MCF 10A (cell line): ENCODE measurements at regions of chr9 and their contacts with region 1.

Region 1: GRCh38 chr9:1619915-1620710 is 395.0 kb upstream of the SMARCA2 start:
- DNase-seq: peak; percentile 32
- H3K4me3 Mint-ChIP-seq: peak overlapping the region; percentile 24
- H3K27ac Mint-ChIP-seq: peak overlapping the region; percentile 60
- H3K4me1 Mint-ChIP-seq: peaks cover 5% of the 10 kb centered on the region
- H3K27me3 Mint-ChIP-seq: peaks cover 50% of the 10 kb centered on the region
- CTCF ChIP-seq: peak; percentile 33

Region 2: GRCh38 chr9:1100945-1101344 is 519.2 kb before region 1 on chr9:
- CTCF ChIA-PET with region 1: interaction called, 11 read pairs
- POLR2A ChIA-PET with region 1: no interaction called
- intact Hi-C with region 1: loop called (anchors 5 kb)
- DNase-seq: peak; percentile 59
- H3K4me3 Mint-ChIP-seq: no peak overlapping the region
- H3K27ac Mint-ChIP-seq: no peak overlapping the region
- H3K4me1 Mint-ChIP-seq: peaks cover 6% of the 10 kb centered on the region
- H3K27me3 Mint-ChIP-seq: peaks cover 11% of the 10 kb centered on the region
- CTCF ChIP-seq: peak; percentile 72

Region 3: DNA sequence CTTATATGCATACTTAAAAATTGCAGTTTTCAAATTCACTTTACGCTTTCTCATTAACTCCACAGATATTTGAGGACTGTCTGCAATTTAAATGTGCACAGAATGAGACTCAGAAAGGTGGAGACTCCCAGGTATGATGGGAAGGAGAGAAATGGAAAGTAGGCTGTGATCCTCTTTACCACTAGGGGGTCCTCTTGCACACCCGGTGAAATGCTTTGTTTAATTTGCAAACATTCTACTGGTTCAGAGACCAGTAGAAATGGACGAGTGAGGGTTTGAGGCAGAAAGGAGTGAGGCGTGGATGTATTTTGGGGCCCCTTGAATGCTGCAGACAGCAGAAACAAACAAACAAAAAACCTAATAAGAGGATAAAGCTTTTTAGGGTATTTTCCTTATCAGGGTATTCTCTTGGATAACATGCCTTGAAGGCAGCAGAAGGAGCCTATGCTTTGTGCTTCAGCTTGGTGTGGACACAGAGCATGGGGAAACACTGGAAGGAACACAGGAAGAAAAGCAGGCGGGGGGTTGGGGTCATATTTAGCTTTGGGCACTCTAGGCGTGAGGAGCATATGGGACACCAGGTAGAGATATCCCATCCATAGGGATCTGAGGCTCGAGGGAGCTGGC is 159.9 kb before region 1 on chr9:
- CTCF ChIA-PET with region 1: interaction called, 4 read pairs
- POLR2A ChIA-PET with region 1: no interaction called
- intact Hi-C with region 1: loop called (anchors 1 kb)
- DNase-seq: peak; percentile 59
- H3K4me3 Mint-ChIP-seq: no peak overlapping the region
- H3K27ac Mint-ChIP-seq: no peak overlapping the region
- H3K4me1 Mint-ChIP-seq: peaks cover 22% of the 10 kb centered on the region
- H3K27me3 Mint-ChIP-seq: no peaks in the 10 kb centered on the region
- CTCF ChIP-seq: peak; percentile 66

Region 4: GRCh38 chr9:1637401-1637800 is 17.3 kb after region 1 on chr9:
- CTCF ChIA-PET with region 1: interaction called, 11 read pairs
- POLR2A ChIA-PET with region 1: interaction called, 3 read pairs
- intact Hi-C with region 1: no loop called
- DNase-seq: no peak
- H3K4me3 Mint-ChIP-seq: no peak overlapping the region
- H3K27ac Mint-ChIP-seq: no peak overlapping the region
- H3K4me1 Mint-ChIP-seq: no peaks in the 10 kb centered on the region
- H3K27me3 Mint-ChIP-seq: no peaks in the 10 kb centered on the region
- CTCF ChIP-seq: no peak

Region 5: GRCh38 chr9:1732670-1733069 is 112.6 kb after region 1 on chr9:
- CTCF ChIA-PET with region 1: interaction called, 13 read pairs
- POLR2A ChIA-PET with region 1: interaction called, 3 read pairs
- intact Hi-C with region 1: no loop called
- DNase-seq: peak; percentile 36
- H3K4me3 Mint-ChIP-seq: no peak overlapping the region
- H3K27ac Mint-ChIP-seq: no peak overlapping the region
- H3K4me1 Mint-ChIP-seq: no peaks in the 10 kb centered on the region
- H3K27me3 Mint-ChIP-seq: peaks cover 50% of the 10 kb centered on the region
- CTCF ChIP-seq: peak; percentile 36